AG04449 (cell line): ENCODE measurements at regions of chr12 and their contacts with region 1.

Region 1: GRCh38 chr12:121399391-121400331 is at the start of gene RNF34:
- DNase-seq: peak; percentile 67
- H3K4me3 ChIP-seq: peak within 1 kb of the TSS; percentile 90
- CTCF ChIP-seq: no peak

Region 2: GRCh38 chr12:121351820-121352681 is 47.6 kb before region 1 on chr12 and contains the start of gene ANAPC5:
- CTCF ChIA-PET with region 1: interaction called, 3 read pairs
- POLR2A ChIA-PET with region 1: interaction called, 36 read pairs
- DNase-seq: peak; percentile 96
- H3K4me3 ChIP-seq: peak within 1 kb of the TSS; percentile 98
- CTCF ChIP-seq: no peak

Region 3: GRCh38 chr12:121364683-121365121 is 35.0 kb before region 1 on chr12:
- CTCF ChIA-PET with region 1: no interaction called
- POLR2A ChIA-PET with region 1: interaction called, 12 read pairs
- DNase-seq: no peak
- H3K4me3 ChIP-seq: peak overlapping the region; percentile 18
- CTCF ChIP-seq: no peak

Region 4: DNA sequence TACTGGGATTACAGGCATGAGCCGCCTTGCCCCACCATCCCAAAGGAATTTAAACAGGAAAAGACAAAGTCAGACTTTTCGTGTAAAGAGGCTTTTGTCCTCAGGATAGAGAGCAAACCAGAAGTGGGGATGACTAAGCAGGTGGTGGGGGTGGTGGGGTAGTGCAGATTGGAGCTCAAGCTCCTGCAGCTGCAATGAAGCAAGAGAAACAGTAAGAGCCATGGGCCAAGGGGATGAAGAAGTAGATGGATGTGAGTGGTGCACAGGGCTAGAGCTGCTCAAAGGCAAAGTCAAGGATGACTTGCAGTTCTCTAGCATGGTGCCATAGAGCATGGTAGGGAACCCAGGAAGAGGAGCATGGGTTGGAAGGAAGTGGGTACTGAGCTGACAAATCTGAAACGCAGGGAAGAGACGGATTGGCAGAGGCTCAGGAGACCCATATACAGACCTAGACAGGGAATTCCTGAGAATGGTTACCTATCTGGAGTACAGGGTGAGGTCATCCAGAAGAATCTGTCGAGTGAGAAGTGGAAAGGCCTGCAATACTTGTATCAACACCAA is 11.2 kb before region 1 on chr12:
- CTCF ChIA-PET with region 1: interaction called, 3 read pairs
- POLR2A ChIA-PET with region 1: interaction called, 10 read pairs
- DNase-seq: peak; percentile 42
- H3K4me3 ChIP-seq: no peak overlapping the region
- CTCF ChIP-seq: no peak

Region 5: DNA sequence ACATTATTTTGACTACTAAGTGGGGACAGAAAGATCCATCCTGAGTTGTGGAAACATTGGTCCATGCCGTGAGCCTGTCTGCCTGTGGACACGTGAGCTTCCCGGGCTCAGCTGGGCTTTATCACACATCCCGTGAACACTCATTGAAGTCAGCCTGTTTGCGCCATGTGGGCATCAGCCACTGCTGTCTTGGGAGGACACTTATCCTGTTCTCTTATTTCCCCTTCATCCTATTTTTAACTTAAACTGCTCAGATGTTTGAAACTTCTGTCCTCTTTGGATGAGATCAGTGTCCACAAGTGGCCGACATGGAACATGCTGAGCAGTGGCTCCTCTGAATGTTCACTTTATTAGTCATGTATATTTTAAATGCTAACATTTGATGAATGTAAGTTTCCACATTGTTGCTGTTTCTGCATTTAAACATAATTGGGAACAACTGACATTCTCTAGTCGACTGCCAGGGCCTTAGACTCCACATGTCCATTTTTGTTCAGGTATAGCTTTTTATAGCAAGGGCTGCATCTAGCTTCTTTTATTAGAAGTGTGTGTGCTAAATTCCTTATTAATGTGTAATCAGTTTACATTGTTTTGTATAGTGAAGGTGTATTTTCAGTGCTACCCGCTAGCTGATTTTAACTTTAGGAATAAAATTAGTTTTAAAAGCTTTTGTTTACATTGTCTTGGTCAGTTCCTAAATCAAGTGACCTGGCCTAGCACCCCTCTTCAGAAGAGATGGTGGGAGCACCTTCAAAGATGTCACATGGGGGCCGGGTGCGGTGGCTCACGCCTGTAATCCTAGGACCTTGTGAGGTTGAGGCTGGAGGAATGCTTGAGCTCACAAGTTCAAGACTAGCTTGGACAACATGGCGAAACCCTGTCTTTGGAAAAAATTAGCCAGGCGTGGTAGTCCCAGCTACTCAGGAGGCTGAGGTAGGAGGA is 24.3 kb after region 1 on chr12:
- CTCF ChIA-PET with region 1: interaction called, 3 read pairs
- POLR2A ChIA-PET with region 1: interaction called, 11 read pairs
- DNase-seq: no peak
- H3K4me3 ChIP-seq: no peak overlapping the region
- CTCF ChIP-seq: no peak